ENCODE measurements at regions of chr17 and their contacts with region 1.

Region 1: GRCh38 chr17:50272711-50273653 is 1.3 kb upstream of the TMEM92 start:
- DNase-seq: no peak
- H3K4me3 ChIP-seq: peak overlapping the region; percentile 63 to 68
- H3K27ac ChIP-seq: peak overlapping the region; percentile 82
- H3K4me1 ChIP-seq: peaks cover 0 to 16% of the 10 kb centered on the region in 2 donors
- H3K27me3 ChIP-seq: no peaks in the 10 kb centered on the region
- CTCF ChIP-seq: peak; percentile 64 to 98 (median 86)

Region 2: DNA sequence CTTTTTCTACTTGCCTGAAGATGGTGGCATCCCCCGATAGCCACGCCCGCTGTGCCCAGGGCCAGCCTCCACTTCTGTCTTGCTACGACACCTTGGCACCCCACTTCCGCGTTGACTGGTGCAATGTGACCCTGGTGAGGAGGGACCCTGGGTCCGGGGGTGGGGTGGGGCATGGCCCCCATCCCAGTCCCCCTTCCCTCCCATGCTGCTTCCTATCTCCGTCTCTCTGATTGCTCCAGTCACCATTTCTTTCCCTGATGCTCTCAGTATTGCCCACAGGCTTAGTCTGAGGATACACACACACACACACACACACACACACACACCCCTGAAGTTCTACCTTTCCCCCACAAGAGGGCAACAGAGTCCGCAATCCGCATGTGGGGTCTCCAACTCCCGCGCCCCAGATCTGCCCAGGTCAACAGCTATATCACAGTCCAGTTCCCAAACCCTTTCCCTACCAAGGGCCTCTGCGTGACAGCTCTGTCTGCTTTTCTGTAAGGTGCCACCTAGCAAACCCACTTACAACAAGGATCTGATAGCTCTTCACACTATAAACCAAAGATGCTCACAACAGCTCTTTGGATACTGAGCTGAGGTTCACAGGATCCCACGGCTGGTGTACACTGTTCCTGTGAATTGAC is 103.7 kb before region 1 on chr17:
- intact Hi-C with region 1: loop called (anchors 1 kb)
- DNase-seq: no peak
- H3K4me3 ChIP-seq: peak overlapping the region in 1 of 2 donors; percentile 31
- H3K27ac ChIP-seq: peak overlapping the region; percentile 97 to 99
- H3K4me1 ChIP-seq: peaks cover 21 to 43% of the 10 kb centered on the region in 2 donors
- H3K27me3 ChIP-seq: no peaks in the 10 kb centered on the region
- CTCF ChIP-seq: peak; percentile 72 to 94 (median 75)

Region 3: DNA sequence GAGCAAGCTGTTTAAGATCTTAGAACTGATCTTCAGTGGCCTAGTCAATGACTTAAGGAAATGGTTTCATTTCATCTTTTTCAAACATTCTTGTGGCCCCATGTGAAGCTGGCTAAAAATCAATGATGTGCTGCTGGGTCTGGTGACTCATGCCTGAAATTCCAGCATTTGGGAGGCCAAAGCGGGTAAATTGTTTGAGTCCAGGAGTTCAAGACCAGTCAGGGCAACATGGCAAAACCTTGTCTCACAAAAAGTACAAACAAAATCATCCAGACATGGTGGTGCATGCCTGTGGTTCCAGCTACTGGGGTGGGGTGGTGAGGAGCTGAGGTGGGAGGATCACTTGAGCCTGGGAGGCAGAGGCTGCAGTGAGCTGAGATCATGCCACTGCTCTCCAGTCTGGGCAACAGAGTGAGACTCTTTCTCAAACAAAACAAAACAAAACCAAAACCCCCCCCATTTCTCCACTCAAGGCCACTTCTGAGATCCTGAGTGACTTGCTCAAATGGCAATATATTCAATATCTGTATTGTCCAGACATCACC is 54.1 kb before region 1 on chr17:
- intact Hi-C with region 1: loop called (anchors 2 kb)
- DNase-seq: no peak
- H3K4me3 ChIP-seq: no peak overlapping the region
- H3K27ac ChIP-seq: peak overlapping the region; percentile 87 to 90
- H3K4me1 ChIP-seq: peaks cover 21 to 55% of the 10 kb centered on the region in 2 donors
- H3K27me3 ChIP-seq: no peaks in the 10 kb centered on the region
- CTCF ChIP-seq: no peak

Region 4: GRCh38 chr17:50297407-50297865 is 24.5 kb after region 1 on chr17:
- intact Hi-C with region 1: loop called (anchors 1 kb)
- DNase-seq: peak; percentile 43 to 85
- H3K4me3 ChIP-seq: no peak overlapping the region
- H3K27ac ChIP-seq: no peak overlapping the region
- H3K4me1 ChIP-seq: no peaks in the 10 kb centered on the region
- H3K27me3 ChIP-seq: no peaks in the 10 kb centered on the region
- CTCF ChIP-seq: peak; percentile 98 to 99 (median 98)

Measured in ascending aorta (tissue), 2 donors.